Posterior vena cava (tissue), 2 donors: ENCODE measurements at regions of chr2 and their contacts with region 1.

Region 1: DNA sequence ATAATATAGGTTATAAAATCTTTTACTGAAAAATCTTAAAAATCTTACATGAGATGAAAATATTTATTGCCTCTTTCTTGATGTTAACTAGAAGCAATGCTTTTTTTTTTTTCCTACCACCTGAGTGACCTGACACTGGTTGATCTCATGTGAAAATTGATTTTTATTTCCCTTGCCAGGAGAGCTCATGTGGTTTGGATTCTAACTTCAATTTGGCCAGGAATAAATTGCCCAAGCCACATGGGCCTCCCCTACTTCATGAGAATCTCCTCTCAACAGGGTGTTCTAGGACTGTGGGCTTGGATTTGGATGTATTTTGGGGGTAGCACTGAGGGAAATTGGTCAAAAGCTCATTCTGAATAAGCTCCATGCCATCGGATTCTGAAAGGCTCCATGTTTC is 20.1 kb downstream of the IDH1 start:
- DNase-seq: no peak

Region 2: DNA sequence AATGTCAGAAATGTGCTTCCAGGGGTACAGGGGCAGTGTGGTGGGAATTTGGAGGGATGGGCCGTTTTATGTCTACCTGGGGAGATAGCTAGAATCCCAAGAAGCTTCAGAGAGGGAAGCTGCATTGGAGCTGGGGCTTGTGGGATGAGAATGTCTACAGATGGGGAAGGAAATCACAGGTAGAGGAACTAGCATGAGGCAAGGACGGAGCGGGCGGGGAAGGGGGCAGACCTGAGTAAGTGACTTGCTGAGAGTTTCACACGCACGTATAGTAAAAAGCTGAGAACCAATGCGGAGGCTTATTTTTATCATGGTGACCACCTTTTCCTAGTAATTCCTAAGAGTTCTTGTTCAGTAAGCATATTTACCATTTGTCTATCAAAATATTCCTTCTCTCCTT is 51.3 kb before region 1 on chr2:
- intact Hi-C with region 1: loop called in 1 of 2 experiments (anchors 10 kb)
- DNase-seq: no peak